Dendritic cell treated with granulocyte-macrophage colony-stimulating factor and Interleukin-4, amounts not matched to agents 40 ng/mL and 50 ng/mL, for 4 days (primary cell): ENCODE measurements at regions of chr7 and their contacts with region 1.

Region 1: GRCh38 chr7:106448992-106449859 is 164.4 kb upstream of the NAMPT start:
- H3K4me3 Mint-ChIP-seq: no peak overlapping the region
- H3K27ac Mint-ChIP-seq: no peak overlapping the region
- H3K4me1 Mint-ChIP-seq: peaks cover 7% of the 10 kb centered on the region
- H3K27me3 Mint-ChIP-seq: no peaks in the 10 kb centered on the region

Region 2: GRCh38 chr7:106384371-106384770 is 64.9 kb before region 1 on chr7:
- intact Hi-C with region 1: loop called (anchors 10 kb)
- H3K4me3 Mint-ChIP-seq: no peak overlapping the region
- H3K27ac Mint-ChIP-seq: peak overlapping the region; percentile 51
- H3K4me1 Mint-ChIP-seq: peaks cover 15% of the 10 kb centered on the region
- H3K27me3 Mint-ChIP-seq: no peaks in the 10 kb centered on the region

Region 3: GRCh38 chr7:106461993-106462859 is 13.0 kb after region 1 on chr7:
- intact Hi-C with region 1: no loop called
- H3K4me3 Mint-ChIP-seq: no peak overlapping the region
- H3K27ac Mint-ChIP-seq: no peak overlapping the region
- H3K4me1 Mint-ChIP-seq: peaks cover 14% of the 10 kb centered on the region
- H3K27me3 Mint-ChIP-seq: no peaks in the 10 kb centered on the region

Region 4: GRCh38 chr7:106501605-106502580 is 52.7 kb after region 1 on chr7:
- intact Hi-C with region 1: loop called (anchors 2 kb)
- H3K4me3 Mint-ChIP-seq: no peak overlapping the region
- H3K27ac Mint-ChIP-seq: peak overlapping the region; percentile 80
- H3K4me1 Mint-ChIP-seq: peaks cover 13% of the 10 kb centered on the region
- H3K27me3 Mint-ChIP-seq: no peaks in the 10 kb centered on the region